ENCODE measurements at regions of chr6 and their contacts with region 1.

Region 1: GRCh38 chr6:26054857-26055669 is 32.2 kb upstream of the HFE start:
- DNase-seq: peak; percentile 94
- H3K4me3 Mint-ChIP-seq: peak overlapping the region; percentile 93
- H3K27ac Mint-ChIP-seq: peak overlapping the region; percentile 98
- H3K4me1 Mint-ChIP-seq: peaks cover 22% of the 10 kb centered on the region
- H3K27me3 Mint-ChIP-seq: peaks cover 14% of the 10 kb centered on the region

Region 2: GRCh38 chr6:25777031-25777430 is 278.0 kb before region 1 on chr6:
- CTCF ChIA-PET with region 1: no interaction called
- POLR2A ChIA-PET with region 1: no interaction called
- intact Hi-C with region 1: loop called (anchors 5 kb)
- DNase-seq: no peak
- H3K4me3 Mint-ChIP-seq: no peak overlapping the region
- H3K27ac Mint-ChIP-seq: no peak overlapping the region
- H3K4me1 Mint-ChIP-seq: peaks cover 19% of the 10 kb centered on the region
- H3K27me3 Mint-ChIP-seq: peaks cover 2% of the 10 kb centered on the region

Region 3: DNA sequence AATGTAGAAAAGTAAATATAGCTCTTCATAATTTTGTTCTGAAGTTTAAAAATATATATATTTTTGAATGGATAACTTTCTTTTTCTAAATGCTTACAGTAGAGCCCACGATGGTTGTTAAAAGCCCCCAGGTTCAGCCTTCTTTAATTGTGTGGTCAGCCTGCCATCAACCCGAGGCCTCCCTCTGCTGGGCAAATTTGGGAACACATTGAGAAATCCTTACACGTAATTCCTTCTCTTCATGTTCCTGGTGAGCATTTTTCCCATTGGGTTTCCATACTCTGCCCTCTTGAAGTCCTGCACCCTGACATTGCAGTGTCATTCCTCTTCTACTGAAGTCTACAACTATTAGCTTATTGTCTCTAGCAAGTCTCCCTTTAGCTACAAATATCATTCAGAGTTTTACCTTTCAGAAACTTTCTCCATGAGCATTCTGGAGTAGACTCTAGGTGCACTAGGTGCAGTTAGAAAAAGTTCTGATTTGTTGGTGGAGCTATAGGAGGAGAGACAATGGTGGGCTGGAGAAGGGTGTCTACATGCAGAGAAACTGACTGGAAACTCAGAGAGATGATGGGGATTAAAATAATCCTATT is 51.9 kb before region 1 on chr6:
- CTCF ChIA-PET with region 1: no interaction called
- POLR2A ChIA-PET with region 1: no interaction called
- intact Hi-C with region 1: no loop called
- DNase-seq: peak; percentile 54
- H3K4me3 Mint-ChIP-seq: no peak overlapping the region
- H3K27ac Mint-ChIP-seq: no peak overlapping the region
- H3K4me1 Mint-ChIP-seq: peaks cover 4% of the 10 kb centered on the region
- H3K27me3 Mint-ChIP-seq: no peaks in the 10 kb centered on the region

Region 4: DNA sequence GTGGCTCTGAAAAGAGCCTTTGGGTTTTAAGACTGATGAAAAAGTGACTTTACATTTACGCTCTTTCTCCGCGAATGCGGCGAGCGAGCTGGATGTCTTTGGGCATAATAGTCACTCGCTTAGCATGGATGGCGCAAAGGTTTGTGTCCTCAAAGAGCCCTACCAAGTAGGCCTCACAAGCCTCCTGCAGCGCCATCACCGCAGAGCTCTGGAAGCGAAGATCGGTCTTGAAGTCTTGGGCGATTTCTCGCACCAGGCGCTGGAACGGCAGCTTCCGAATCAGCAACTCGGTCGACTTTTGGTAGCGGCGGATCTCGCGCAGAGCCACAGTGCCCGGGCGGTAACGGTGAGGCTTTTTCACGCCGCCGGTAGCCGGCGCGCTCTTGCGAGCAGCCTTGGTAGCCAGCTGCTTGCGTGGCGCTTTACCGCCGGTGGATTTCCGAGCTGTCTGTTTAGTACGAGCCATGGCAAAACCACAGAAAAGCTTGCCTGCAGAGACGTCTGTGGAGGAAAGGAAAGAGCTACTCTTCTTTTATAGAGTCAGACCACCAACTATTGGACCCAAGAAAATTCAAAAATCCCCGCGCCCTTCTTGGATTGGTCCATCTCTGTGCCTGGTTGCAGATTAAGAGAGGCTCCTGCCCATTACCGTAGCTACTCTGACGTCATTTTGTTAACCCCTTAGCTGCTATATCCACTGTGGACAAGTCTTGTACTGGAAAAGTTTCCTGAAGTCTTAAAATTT is 23.3 kb before region 1 on chr6:
- CTCF ChIA-PET with region 1: interaction called, 5 read pairs
- POLR2A ChIA-PET with region 1: interaction called, 72 read pairs
- intact Hi-C with region 1: loop called (anchors 1 kb)
- DNase-seq: peak; percentile 93
- H3K4me3 Mint-ChIP-seq: peak overlapping the region; percentile 83
- H3K27ac Mint-ChIP-seq: peak overlapping the region; percentile 99
- H3K4me1 Mint-ChIP-seq: peaks cover 49% of the 10 kb centered on the region
- H3K27me3 Mint-ChIP-seq: peaks cover 17% of the 10 kb centered on the region

Region 5: DNA sequence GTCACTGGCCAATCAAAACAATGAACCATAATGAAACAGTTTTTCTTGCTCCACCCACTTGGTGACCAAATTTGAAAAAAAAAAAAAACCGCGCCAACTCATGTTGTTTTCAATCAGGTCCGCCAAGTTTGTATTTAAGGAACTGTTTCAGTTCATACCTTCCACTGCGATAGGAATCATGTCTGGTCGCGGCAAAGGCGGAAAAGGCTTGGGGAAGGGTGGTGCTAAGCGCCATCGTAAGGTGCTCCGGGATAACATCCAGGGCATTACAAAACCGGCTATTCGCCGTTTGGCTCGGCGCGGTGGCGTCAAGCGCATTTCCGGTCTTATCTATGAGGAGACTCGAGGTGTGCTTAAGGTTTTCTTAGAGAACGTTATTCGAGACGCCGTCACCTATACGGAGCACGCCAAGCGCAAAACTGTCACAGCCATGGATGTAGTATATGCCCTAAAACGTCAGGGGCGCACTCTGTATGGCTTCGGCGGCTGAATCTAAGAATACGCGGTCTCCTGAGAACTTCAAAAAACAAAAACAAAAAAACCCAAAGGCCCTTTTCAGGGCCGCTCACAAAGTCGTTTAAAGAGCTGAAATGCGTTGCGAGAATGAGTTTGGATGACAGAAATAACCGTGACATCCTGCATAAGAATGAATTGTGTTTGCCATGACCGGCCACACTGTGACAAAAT is 48.9 kb after region 1 on chr6:
- CTCF ChIA-PET with region 1: interaction called, 478 read pairs
- POLR2A ChIA-PET with region 1: interaction called, 21 read pairs
- intact Hi-C with region 1: loop called (anchors 2 kb)
- DNase-seq: peak; percentile 93
- H3K4me3 Mint-ChIP-seq: peak overlapping the region; percentile 80
- H3K27ac Mint-ChIP-seq: peak overlapping the region; percentile 93
- H3K4me1 Mint-ChIP-seq: peaks cover 18% of the 10 kb centered on the region
- H3K27me3 Mint-ChIP-seq: peaks cover 3% of the 10 kb centered on the region

Region 6: GRCh38 chr6:26196846-26197648 is 142.0 kb after region 1 on chr6:
- CTCF ChIA-PET with region 1: no interaction called
- POLR2A ChIA-PET with region 1: interaction called, 19 read pairs
- intact Hi-C with region 1: no loop called
- DNase-seq: peak; percentile 84
- H3K4me3 Mint-ChIP-seq: peak overlapping the region; percentile 86
- H3K27ac Mint-ChIP-seq: peak overlapping the region; percentile 99
- H3K4me1 Mint-ChIP-seq: peaks cover 31% of the 10 kb centered on the region
- H3K27me3 Mint-ChIP-seq: peaks cover 3% of the 10 kb centered on the region

Region 7: DNA sequence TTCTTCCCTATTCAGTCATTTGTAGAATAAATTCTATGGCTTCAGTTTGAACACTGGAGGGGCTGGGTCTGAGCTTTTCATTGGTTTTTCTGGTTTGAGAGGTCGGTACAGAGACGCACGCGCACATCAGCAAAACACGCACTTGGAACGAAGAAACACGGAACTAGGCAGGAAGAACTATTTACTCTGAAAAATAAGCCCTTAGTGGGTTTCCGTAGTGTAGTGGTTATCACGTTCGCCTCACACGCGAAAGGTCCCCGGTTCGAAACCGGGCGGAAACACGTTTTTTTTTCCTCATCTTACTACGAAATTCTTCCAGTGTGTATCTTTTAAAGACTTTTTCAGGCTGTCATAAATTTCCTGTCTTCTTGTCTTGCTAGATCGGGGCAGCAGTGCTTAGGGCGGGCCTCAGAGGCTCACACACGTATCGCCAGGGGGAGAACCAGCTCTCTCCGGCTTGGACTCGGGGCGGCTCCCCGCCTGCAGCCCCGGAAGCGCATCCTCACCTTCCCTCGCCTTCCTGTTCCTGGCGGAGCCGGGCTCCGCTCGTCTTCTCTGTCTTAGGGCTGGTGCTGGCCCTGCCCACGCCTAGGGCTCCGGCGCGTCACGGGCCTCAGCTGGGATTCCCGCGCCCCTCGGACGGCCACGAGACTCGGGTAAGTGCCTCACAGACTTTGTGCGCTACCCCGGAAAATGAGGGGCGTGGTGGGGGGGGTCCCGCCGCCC is 482.9 kb after region 1 on chr6 and contains the start of gene HMGN4:
- CTCF ChIA-PET with region 1: no interaction called
- POLR2A ChIA-PET with region 1: no interaction called
- intact Hi-C with region 1: loop called (anchors 10 kb)
- DNase-seq: peak; percentile 88
- H3K4me3 Mint-ChIP-seq: peak within 1 kb of the TSS; percentile 84
- H3K27ac Mint-ChIP-seq: peak within 1 kb of the TSS; percentile 97
- H3K4me1 Mint-ChIP-seq: peaks cover 64% of the 10 kb centered on the region
- H3K27me3 Mint-ChIP-seq: peaks cover 2% of the 10 kb centered on the region
- total RNA-seq, gene HMGN4: 93.2 to 96.0 TPM

Measured in activated CD4-positive, alpha-beta memory T cell treated with anti-CD3 and anti-CD28 coated beads for 36 hours (primary cell).